HEK293T (cell line): ENCODE measurements at regions of chr15 and their contacts with region 1.

Region 1: GRCh38 chr15:92521624-92522008 is 127.9 kb downstream of the ST8SIA2 start:
- DNase-seq: peak; percentile 72

Region 2: GRCh38 chr15:92541291-92542200 is 19.9 kb after region 1 on chr15:
- CTCF ChIA-PET with region 1: no interaction called
- POLR2A ChIA-PET with region 1: no interaction called
- DNase-seq: no peak

Region 3: GRCh38 chr15:92714477-92715401 is 193.1 kb after region 1 on chr15:
- CTCF ChIA-PET with region 1: interaction called, 37 read pairs
- POLR2A ChIA-PET with region 1: interaction called, 3 read pairs
- DNase-seq: peak; percentile 82